Activated CD8-positive, alpha-beta T cell treated with anti-CD3 and anti-CD28 coated beads, Interleukin-2, amount 10 ng/mL, durations not matched to agents 7 days and 5 days (primary cell): ENCODE measurements at regions of chr7 and their contacts with region 1.

Region 1: DNA sequence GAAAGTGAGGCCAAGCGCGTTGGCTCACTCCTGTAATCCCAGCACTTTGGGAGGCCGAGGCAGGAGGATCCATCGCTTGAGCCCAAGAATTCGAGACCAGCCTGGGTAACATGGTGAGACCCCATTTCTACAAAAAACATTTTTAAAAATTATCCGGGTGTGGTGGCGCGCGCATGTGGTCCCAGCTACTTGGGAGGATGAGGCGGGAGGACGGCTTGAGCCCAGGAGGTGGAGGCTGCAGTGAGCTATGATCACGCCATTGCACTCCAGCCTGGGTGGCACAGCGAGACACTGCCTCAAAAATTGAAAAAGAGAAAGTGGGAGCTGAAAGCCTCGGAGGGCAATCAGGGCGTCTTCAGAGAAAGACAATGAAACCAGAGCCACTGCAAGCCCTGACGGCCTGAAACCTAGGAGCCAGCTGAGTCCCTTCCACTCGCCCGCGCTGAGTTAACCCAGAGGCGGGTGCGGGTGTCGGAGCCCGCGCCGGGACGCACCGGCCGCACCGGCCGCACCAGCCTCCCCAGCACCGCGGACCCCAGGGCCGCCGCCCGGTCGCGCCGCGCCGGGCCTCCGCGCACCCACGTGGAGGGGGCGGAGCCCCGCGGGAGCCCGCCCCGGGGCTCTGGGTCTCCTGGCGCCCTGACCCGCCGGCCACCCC is 22.4 kb downstream of the ZFAND2A start:
- DNase-seq: peak; percentile 38
- ATAC-seq: peak; percentile 78
- H3K4me3 Mint-ChIP-seq: peak overlapping the region; percentile 80
- H3K27ac Mint-ChIP-seq: peak overlapping the region; percentile 92
- H3K4me1 Mint-ChIP-seq: peaks cover 21% of the 10 kb centered on the region
- H3K27me3 Mint-ChIP-seq: no peaks in the 10 kb centered on the region

Region 2: GRCh38 chr7:1004018-1004852 is 133.4 kb before region 1 on chr7:
- CTCF ChIA-PET with region 1: no interaction called
- POLR2A ChIA-PET with region 1: no interaction called
- DNase-seq: no peak
- ATAC-seq: no peak
- H3K4me3 Mint-ChIP-seq: no peak overlapping the region
- H3K27ac Mint-ChIP-seq: no peak overlapping the region
- H3K4me1 Mint-ChIP-seq: no peaks in the 10 kb centered on the region
- H3K27me3 Mint-ChIP-seq: no peaks in the 10 kb centered on the region

Region 3: GRCh38 chr7:1086588-1087464 is 50.8 kb before region 1 on chr7:
- CTCF ChIA-PET with region 1: interaction called, 11 read pairs
- POLR2A ChIA-PET with region 1: no interaction called
- DNase-seq: peak; percentile 82
- ATAC-seq: peak; percentile 93
- H3K4me3 Mint-ChIP-seq: peak overlapping the region; percentile 65
- H3K27ac Mint-ChIP-seq: no peak overlapping the region
- H3K4me1 Mint-ChIP-seq: peaks cover 12% of the 10 kb centered on the region
- H3K27me3 Mint-ChIP-seq: no peaks in the 10 kb centered on the region

Region 4: DNA sequence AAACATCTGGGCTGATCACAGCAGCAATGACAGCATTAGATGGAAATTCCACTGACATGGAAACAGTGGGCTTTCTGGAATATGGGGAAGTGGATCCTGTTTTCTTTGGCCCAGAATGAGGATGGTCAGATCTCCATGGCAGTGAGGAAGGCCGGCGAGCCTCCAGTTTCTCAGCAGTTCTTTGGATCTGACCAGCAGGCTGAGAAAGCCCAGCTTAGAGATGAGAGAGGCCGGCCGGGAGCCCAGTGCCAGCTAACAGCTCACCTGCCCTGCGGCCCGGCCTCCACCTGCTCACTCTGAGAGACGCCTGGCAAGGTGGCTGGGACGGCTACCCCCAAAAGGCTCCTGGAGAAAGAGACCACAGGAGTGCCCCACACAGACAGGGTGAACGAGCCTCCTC is 25.5 kb before region 1 on chr7:
- CTCF ChIA-PET with region 1: no interaction called
- POLR2A ChIA-PET with region 1: no interaction called
- DNase-seq: no peak
- ATAC-seq: no peak
- H3K4me3 Mint-ChIP-seq: no peak overlapping the region
- H3K27ac Mint-ChIP-seq: no peak overlapping the region
- H3K4me1 Mint-ChIP-seq: no peaks in the 10 kb centered on the region
- H3K27me3 Mint-ChIP-seq: no peaks in the 10 kb centered on the region

Region 5: DNA sequence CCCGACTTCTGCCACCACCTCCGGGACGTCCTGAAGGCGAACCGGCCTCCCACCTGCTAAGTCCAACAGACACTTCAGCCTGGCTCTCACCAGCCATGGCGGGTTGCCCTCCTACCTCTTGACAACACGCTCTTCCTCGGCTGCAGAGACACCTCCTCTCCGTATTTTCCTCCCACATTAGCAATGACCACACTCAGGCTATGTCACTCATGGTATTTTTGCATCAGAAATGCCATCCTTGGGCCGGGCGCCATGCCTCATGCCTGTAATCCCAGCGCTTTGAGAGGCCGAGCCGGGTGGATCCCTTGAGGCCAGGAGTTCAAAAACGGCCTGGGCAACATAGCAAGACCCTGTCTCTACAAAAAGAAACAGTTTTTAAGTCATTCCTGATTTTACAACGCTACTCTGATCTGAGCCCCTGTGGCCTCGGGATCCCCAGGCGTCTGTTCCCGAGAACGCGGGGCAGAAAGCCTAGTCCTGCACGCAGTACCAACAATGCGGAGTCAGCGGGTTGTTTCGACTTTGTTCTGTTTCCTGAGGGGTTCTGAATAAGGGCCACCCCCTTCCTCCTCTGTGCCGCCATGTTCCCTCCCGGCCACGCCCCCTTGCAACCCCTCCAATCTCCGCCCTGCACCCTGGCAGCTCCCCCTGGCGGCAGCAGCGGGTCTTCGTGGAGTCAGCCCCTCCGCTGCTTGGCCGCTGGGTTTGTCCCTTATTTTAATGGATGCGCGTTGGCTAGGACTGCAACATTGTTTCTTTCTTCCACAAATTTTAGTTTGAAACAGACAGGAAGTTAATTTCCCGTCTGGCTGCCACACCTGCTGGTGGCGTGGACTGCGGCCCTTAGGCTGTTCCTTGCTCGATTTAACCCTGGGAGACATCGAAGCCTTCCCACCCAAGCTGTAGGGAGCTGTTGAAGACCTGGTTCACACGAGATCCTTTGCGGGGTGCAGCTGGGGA is 32.0 kb after region 1 on chr7:
- CTCF ChIA-PET with region 1: interaction called, 11 read pairs
- POLR2A ChIA-PET with region 1: no interaction called
- DNase-seq: peak; percentile 95
- ATAC-seq: peak; percentile 97
- H3K4me3 Mint-ChIP-seq: peak overlapping the region; percentile 77
- H3K27ac Mint-ChIP-seq: peak overlapping the region; percentile 89
- H3K4me1 Mint-ChIP-seq: peaks cover 18% of the 10 kb centered on the region
- H3K27me3 Mint-ChIP-seq: no peaks in the 10 kb centered on the region